Heart left ventricle (tissue), 16 donors: ENCODE measurements at regions of chr4 and their contacts with region 1.

Region 1: DNA sequence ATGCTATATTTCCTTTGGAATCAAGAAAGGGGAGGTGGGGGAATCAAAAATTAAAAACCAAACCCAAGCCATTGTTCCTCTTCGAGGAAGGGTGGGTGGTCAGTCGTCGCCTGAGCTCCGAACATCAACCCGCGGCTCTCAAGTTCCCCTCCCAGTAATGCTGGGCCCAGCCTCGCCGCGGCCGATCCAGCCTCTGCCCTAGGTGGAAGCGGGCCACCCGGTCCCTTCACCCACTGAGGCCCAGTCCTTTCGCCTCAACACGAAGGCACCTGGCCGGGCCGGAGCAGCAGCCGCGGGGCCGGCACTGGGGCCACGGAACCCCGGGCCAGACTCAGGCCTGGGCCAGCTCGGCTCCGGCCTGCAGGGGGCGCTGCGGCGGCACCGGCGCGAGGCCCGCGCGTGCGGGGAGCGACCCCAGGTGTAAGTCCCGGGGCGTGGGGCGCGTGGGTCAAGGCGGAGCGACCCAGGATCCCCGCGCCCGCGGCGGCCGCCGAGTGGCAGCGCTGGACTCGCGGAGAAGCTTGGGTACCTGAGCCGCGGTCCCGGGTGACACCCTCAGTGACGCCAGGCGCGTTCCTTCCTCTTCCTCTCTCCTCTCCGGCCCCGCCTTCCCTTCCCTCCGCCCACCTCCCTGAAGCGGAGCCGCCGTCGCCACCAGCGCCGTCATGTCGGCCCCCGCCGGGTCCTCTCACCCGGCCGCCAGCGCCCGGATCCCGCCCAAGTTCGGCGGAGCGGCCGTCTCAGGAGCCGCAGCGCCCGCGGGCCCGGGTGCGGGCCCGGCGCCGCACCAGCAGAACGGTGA is at the start of gene SEC24B:
- DNase-seq: peak; percentile 94 to 95 (median 94)
- ATAC-seq: peak; percentile 94 to 98 (median 96)
- H3K4me3 ChIP-seq: peak within 1 kb of the TSS; percentile 72 to 98 (median 84)
- H3K27ac ChIP-seq: peak within 1 kb of the TSS; percentile 82 to 95 (median 93)
- H3K4me1 ChIP-seq: peaks cover 11 to 46% (median 34%) of the 10 kb centered on the region in 12 donors
- H3K27me3 ChIP-seq: no peaks in the 10 kb centered on the region
- CTCF ChIP-seq: peak; percentile 45 to 99 (median 92)
- POLR2A ChIP-seq: peak in 1 of 2 donors; percentile 89
- total RNA-seq, gene SEC24B: 20.7 to 34.8 (median 30.5) TPM

Region 2: DNA sequence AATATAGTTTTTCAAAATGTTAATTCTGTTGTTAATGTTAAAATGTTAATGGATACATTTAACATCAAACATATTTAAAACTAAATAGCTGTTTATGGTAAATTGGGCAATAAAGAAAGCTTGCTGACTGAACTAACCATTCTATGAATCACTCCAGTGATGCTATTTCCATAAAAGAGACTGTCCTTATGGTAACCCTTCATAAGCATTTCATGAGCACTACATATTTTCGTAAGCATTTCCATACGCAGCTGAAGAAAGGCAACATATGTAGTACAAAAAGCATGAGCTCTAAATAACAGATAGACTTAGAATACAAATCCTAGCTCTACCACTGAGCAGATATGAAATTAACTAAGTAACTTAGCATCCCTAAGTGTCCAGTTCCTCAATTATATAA is 319.9 kb before region 1 on chr4:
- intact Hi-C with region 1: no loop called
- DNase-seq: no peak
- ATAC-seq: no peak
- H3K4me3 ChIP-seq: no peak overlapping the region
- H3K27ac ChIP-seq: no peak overlapping the region
- H3K4me1 ChIP-seq: no peaks in the 10 kb centered on the region
- H3K27me3 ChIP-seq: no peaks in the 10 kb centered on the region
- CTCF ChIP-seq: no peak
- POLR2A ChIP-seq: no peak

Region 3: GRCh38 chr4:109497511-109497910 is 64.1 kb after region 1 on chr4:
- intact Hi-C with region 1: loop called in 7 of 10 experiments (anchors 10 kb)
- DNase-seq: no peak
- ATAC-seq: no peak
- H3K4me3 ChIP-seq: no peak overlapping the region
- H3K27ac ChIP-seq: no peak overlapping the region
- H3K4me1 ChIP-seq: peaks cover 0 to 7% (median 0%) of the 10 kb centered on the region in 12 donors
- H3K27me3 ChIP-seq: no peaks in the 10 kb centered on the region
- CTCF ChIP-seq: no peak
- POLR2A ChIP-seq: no peak

Region 4: DNA sequence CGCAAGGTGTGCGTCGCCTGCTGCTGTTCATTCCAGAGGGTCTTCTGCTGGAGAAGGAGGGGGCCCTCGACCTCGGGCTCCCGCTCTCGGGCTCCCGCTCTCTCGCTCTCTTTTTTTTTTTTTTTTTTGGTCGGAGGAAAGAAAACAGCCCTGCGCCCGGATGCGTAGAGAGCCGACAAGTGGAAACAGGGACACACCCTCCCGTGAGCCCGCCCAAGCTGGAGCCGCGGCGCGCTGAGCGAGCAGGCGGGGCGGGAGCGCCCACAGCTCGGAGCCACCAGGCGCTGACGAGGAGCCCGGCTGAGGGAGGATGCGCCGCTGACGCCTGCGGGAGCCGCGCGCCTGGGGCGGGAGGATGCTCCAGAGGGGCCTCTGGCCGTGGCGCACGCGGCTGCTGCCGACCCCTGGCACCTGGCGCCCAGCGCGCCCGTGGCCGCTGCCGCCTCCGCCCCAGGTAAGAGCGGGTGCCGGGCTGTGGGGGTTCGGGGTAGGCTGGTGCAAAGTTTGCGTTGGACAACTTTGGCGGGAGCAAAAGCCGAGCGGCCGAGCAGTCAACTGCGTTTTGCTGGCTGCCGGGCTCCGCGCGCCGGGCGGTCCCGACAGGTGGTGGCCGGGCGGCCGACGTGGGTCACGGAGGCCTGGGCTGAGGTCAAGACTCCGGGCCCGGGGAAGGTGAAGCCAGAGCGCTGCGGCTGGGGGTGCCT is 126.7 kb after region 1 on chr4 and contains the start of gene MCUB:
- intact Hi-C with region 1: loop called in 3 of 10 experiments (anchors 1 to 10 kb)
- DNase-seq: peak; percentile 85 to 94 (median 88)
- ATAC-seq: peak; percentile 84 to 99 (median 98)
- H3K4me3 ChIP-seq: peak within 1 kb of the TSS; percentile 50 to 95 (median 78)
- H3K27ac ChIP-seq: peak within 1 kb of the TSS; percentile 33 to 95 (median 82)
- H3K4me1 ChIP-seq: peaks cover 0 to 31% (median 7%) of the 10 kb centered on the region in 12 donors
- H3K27me3 ChIP-seq: peaks cover 0 to 7% (median 0%) of the 10 kb centered on the region in 9 donors
- CTCF ChIP-seq: no peak
- POLR2A ChIP-seq: peak in 1 of 2 donors; percentile 37
- total RNA-seq, gene MCUB: 2.6 to 15.1 (median 4.7) TPM

Region 5: GRCh38 chr4:109665783-109666485 is 232.5 kb after region 1 on chr4:
- intact Hi-C with region 1: loop called in 3 of 10 experiments (anchors 5 to 10 kb)
- DNase-seq: no peak
- ATAC-seq: no peak
- H3K4me3 ChIP-seq: no peak overlapping the region
- H3K27ac ChIP-seq: no peak overlapping the region
- H3K4me1 ChIP-seq: peaks cover 0 to 10% (median 0%) of the 10 kb centered on the region in 12 donors
- H3K27me3 ChIP-seq: no peaks in the 10 kb centered on the region
- CTCF ChIP-seq: no peak
- POLR2A ChIP-seq: no peak

Region 6: GRCh38 chr4:109729718-109730618 is 296.6 kb after region 1 on chr4 and contains the start of gene PLA2G12A:
- intact Hi-C with region 1: loop called in 2 of 10 experiments (anchors 5 to 10 kb)
- DNase-seq: peak; percentile 66 to 83 (median 70)
- ATAC-seq: peak; percentile 84 to 97 (median 94)
- H3K4me3 ChIP-seq: peak within 1 kb of the TSS; percentile 78 to 98 (median 92)
- H3K27ac ChIP-seq: peak within 1 kb of the TSS; percentile 8 to 90 (median 76)
- H3K4me1 ChIP-seq: peaks cover 0 to 20% (median 12%) of the 10 kb centered on the region in 12 donors
- H3K27me3 ChIP-seq: no peaks in the 10 kb centered on the region
- CTCF ChIP-seq: no peak
- POLR2A ChIP-seq: peak in 1 of 2 donors; percentile 64
- total RNA-seq, gene PLA2G12A: 32.6 to 68.5 (median 58.5) TPM

Region 7: DNA sequence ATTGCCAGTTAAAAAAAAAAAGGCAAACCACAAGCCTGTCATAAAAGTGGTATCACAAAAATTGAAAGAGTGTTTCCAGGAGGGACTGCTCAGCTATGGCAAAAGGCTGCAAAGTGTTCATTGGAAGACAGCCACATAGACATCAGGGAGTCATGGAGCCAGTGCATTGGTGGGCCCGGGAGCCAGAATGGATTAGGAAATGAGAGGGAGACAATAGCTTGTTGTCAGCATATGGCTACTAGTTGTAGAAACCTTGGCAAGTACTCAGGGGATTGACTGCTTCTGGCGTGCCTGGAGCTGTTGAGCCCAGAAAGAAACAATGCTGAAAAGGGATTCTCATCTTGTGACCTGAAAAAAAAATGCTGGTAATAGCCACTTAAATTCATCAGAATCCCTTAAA is 387.2 kb after region 1 on chr4:
- intact Hi-C with region 1: loop called in 6 of 10 experiments (anchors 2 to 5 kb)
- DNase-seq: no peak
- ATAC-seq: no peak
- H3K4me3 ChIP-seq: no peak overlapping the region
- H3K27ac ChIP-seq: no peak overlapping the region
- H3K4me1 ChIP-seq: peaks cover 0 to 15% (median 9%) of the 10 kb centered on the region in 12 donors
- H3K27me3 ChIP-seq: no peaks in the 10 kb centered on the region
- CTCF ChIP-seq: no peak
- POLR2A ChIP-seq: no peak

Region 8: GRCh38 chr4:110778521-110778920 is 1345.1 kb after region 1 on chr4:
- intact Hi-C with region 1: no loop called
- DNase-seq: no peak
- ATAC-seq: no peak
- H3K4me3 ChIP-seq: no peak overlapping the region
- H3K27ac ChIP-seq: no peak overlapping the region
- H3K4me1 ChIP-seq: no peaks in the 10 kb centered on the region
- H3K27me3 ChIP-seq: no peaks in the 10 kb centered on the region
- CTCF ChIP-seq: no peak
- POLR2A ChIP-seq: no peak